ENCODE measurements at regions of chr12 and their contacts with region 1.

Region 1: DNA sequence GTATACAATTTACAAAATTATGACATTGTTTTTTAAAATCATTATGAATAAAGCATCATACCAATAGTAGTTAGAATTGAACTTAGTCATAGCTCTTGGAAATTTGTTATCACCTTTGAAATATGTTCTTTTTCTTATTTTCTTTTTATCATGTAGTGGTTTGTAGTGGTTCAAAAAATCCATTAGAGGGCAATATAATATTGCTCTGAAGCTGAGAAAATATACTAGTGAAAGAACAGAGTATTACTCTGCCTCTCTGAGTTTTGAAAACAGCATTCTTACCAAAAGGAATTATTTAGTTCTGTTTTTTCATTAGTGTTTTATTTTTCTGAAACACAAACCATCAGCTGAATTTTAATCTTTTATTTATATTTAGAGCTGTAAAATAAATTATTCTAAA is 76.2 kb downstream of the PDZRN4 start:
- DNase-seq: no peak
- H3K4me3 ChIP-seq: no peak overlapping the region
- CTCF ChIP-seq: no peak

Region 2: DNA sequence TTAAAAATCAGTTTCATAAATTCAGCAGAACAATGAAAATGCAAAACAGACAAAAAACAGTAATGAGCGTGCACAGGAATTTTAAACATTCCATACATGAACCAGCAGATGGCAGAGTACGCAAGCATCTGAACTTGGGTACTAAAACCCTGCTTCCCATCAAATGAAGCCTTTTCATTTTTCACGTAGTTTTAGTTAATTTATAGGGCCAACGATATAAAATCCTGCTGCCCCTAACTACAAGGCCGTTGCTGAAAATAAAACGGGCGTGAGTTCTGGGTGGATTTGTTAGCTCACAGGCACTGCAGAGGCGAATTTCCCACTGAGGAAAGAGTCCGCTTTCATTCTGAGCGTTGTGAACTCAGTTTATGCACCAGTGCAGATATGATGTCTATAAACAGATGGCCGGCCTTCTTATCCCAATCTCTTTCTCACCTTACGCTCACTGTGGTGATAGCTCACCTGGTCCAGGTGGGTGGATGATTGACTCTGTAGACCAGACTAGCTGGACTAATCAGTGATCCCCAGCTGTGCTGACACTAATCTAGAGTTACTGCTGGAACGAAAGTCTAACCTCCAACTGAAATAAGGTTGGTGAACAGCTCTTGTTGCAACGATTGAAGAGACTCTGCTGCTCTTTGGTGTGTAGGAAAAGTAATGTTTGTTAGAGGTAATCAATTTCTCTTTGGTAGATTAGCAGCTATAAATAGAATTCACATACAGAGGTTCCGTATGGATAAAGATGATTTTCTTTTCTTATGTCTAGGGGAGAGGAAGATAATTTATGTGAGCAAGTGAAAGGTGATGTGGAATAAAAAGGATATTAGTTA is 13.1 kb after region 1 on chr12:
- CTCF ChIA-PET with region 1: interaction called, 27 read pairs
- POLR2A ChIA-PET with region 1: no interaction called
- DNase-seq: peak; percentile 5
- H3K4me3 ChIP-seq: no peak overlapping the region
- CTCF ChIP-seq: peak; percentile 49